A673 (cell line): ENCODE measurements at regions of chrX and their contacts with region 1.

Region 1: DNA sequence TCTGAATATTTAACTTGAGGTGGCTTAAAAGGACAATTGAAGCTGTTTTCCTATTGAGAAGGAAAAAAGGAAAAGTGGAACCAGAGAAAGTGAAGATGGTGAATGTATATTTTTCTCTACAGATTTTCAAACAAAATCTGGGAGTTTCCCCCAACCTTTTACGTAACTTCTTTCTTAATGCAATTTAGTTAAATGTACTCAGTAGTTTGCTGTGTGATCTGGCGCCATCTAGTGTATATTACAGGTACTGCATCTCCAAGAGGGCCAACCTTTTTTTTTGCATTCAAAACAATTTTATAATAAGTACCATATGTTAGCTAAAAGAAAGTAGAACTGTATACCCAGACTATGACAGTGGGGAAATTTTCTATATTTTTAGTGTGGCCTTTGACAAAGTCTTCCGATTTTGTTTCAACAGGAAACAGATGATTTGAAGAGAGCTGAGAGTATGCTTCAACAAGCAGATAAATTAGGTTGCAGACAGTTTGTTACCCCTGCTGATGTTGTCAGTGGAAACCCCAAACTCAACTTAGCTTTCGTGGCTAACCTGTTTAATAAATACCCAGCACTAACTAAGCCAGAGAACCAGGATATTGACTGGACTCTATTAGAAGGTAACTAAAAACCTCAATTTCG is 82.0 kb downstream of the PLS3 start:
- DNase-seq: peak; percentile 76
- H3K4me3 ChIP-seq: no peak overlapping the region
- H3K27ac ChIP-seq: no peak overlapping the region
- H3K4me1 ChIP-seq: peaks cover 5% of the 10 kb centered on the region
- H3K27me3 ChIP-seq: peaks cover 20% of the 10 kb centered on the region
- CTCF ChIP-seq: peak; percentile 97

Region 2: GRCh38 chrX:114889481-114889880 is 753.5 kb before region 1 on chrX:
- CTCF ChIA-PET with region 1: no interaction called
- POLR2A ChIA-PET with region 1: no interaction called
- intact Hi-C with region 1: no loop called
- DNase-seq: no peak
- H3K4me3 ChIP-seq: no peak overlapping the region
- H3K27ac ChIP-seq: no peak overlapping the region
- H3K4me1 ChIP-seq: no peaks in the 10 kb centered on the region
- H3K27me3 ChIP-seq: peaks cover 5% of the 10 kb centered on the region
- CTCF ChIP-seq: no peak

Region 3: GRCh38 chrX:115330498-115331168 is 312.4 kb before region 1 on chrX:
- CTCF ChIA-PET with region 1: interaction called, 5 read pairs
- POLR2A ChIA-PET with region 1: no interaction called
- intact Hi-C with region 1: loop called (anchors 1 kb)
- DNase-seq: peak; percentile 74
- H3K4me3 ChIP-seq: no peak overlapping the region
- H3K27ac ChIP-seq: no peak overlapping the region
- H3K4me1 ChIP-seq: no peaks in the 10 kb centered on the region
- H3K27me3 ChIP-seq: no peaks in the 10 kb centered on the region
- CTCF ChIP-seq: peak; percentile 92